ENCODE measurements at regions of chr17 and their contacts with region 1.

Region 1: GRCh38 chr17:35432176-35433074 is at the start of gene SLFN12:
- DNase-seq: peak; percentile 58 to 83
- H3K4me3 ChIP-seq: peak within 1 kb of the TSS; percentile 57
- H3K27ac ChIP-seq: peak within 1 kb of the TSS; percentile 44; the same call in 1 of the 2 replicates
- H3K4me1 ChIP-seq: peaks cover 18% of the 10 kb centered on the region
- H3K27me3 ChIP-seq: no peaks in the 10 kb centered on the region
- CTCF ChIP-seq: no peak
- total RNA-seq, gene SLFN12: 9.7 and 14.3 TPM in 2 replicates

Region 2: GRCh38 chr17:35257208-35257659 is 175.2 kb before region 1 on chr17:
- CTCF ChIA-PET with region 1: no interaction called
- POLR2A ChIA-PET with region 1: no interaction called
- intact Hi-C with region 1: loop called (anchors 5 kb)
- DNase-seq: peak; percentile 86 to 92
- H3K4me3 ChIP-seq: 0 out of 2 replicates have a peak overlapping the region, but pooled peaks have one; percentile 5
- H3K27ac ChIP-seq: peak overlapping the region; percentile 50
- H3K4me1 ChIP-seq: peaks cover 42% of the 10 kb centered on the region
- H3K27me3 ChIP-seq: no peaks in the 10 kb centered on the region
- CTCF ChIP-seq: no peak

Region 3: DNA sequence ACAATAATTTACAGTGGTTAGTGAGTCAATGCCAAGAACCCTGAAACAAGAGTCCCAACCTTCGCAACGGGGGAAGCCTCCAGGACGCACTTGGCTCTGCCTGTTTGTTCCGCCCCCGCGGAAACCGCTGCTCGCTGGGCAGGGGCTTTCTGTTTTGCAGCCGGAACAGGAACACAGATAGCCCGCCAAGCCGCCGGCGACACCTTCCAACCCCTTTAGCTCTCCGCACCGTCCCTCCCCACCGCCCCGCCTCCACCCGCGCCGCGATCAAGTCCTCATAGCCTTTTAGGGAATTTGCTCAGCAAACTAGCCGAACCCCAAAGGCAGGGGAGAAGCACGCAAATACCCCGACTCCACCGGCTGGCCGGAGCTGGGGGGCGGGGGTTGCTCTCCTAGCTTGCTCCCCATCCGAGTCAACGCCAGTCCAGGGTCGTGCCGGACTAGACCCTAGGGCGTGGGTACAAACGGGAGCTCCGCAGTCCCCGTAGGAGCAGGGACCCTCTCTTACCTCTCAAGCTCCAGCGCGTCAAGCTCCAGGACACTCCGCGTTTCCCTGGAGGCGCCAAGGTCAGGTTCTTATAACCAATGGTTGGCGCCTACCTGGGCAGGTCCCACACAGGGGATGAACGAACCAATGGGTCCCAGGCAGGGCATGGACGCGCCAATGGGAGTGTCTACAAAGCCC is 15.9 kb after region 1 on chr17 and contains the start of gene SLFN13:
- CTCF ChIA-PET with region 1: no interaction called
- POLR2A ChIA-PET with region 1: interaction called, 4 read pairs
- intact Hi-C with region 1: loop called (anchors 1 kb)
- DNase-seq: peak; percentile 36 to 72
- H3K4me3 ChIP-seq: peak within 1 kb of the TSS; percentile 47; the same call in 1 of the 2 replicates
- H3K27ac ChIP-seq: no peak within 1 kb of the TSS
- H3K4me1 ChIP-seq: no peaks in the 10 kb centered on the region
- H3K27me3 ChIP-seq: peaks cover 31% of the 10 kb centered on the region
- CTCF ChIP-seq: no peak
- total RNA-seq, gene SLFN13: 22.1 and 38.5 TPM in 2 replicates